ENCODE measurements at regions of chr11 and their contacts with region 1.

Region 1: GRCh38 chr11:20131788-20132666 is 28.2 kb downstream of the DBX1 start:
- DNase-seq: peak; percentile 49 to 78
- H3K4me3 ChIP-seq: peak overlapping the region; percentile 50 to 53
- H3K27ac ChIP-seq: peak overlapping the region in 1 of 2 donors; percentile 48
- H3K4me1 ChIP-seq: peaks cover 0 to 8% (median 7%) of the 10 kb centered on the region in 4 donors
- H3K27me3 ChIP-seq: no peaks in the 10 kb centered on the region
- CTCF ChIP-seq: peak; percentile 85 to 87

Region 2: GRCh38 chr11:19951558-19952115 is 180.4 kb before region 1 on chr11:
- intact Hi-C with region 1: loop called (anchors 5 kb)
- DNase-seq: no peak
- H3K4me3 ChIP-seq: no peak overlapping the region
- H3K27ac ChIP-seq: peak overlapping the region; percentile 35 to 66
- H3K4me1 ChIP-seq: peaks cover 0 to 57% (median 39%) of the 10 kb centered on the region in 4 donors
- H3K27me3 ChIP-seq: no peaks in the 10 kb centered on the region
- CTCF ChIP-seq: peak; percentile 56 to 76

Region 3: DNA sequence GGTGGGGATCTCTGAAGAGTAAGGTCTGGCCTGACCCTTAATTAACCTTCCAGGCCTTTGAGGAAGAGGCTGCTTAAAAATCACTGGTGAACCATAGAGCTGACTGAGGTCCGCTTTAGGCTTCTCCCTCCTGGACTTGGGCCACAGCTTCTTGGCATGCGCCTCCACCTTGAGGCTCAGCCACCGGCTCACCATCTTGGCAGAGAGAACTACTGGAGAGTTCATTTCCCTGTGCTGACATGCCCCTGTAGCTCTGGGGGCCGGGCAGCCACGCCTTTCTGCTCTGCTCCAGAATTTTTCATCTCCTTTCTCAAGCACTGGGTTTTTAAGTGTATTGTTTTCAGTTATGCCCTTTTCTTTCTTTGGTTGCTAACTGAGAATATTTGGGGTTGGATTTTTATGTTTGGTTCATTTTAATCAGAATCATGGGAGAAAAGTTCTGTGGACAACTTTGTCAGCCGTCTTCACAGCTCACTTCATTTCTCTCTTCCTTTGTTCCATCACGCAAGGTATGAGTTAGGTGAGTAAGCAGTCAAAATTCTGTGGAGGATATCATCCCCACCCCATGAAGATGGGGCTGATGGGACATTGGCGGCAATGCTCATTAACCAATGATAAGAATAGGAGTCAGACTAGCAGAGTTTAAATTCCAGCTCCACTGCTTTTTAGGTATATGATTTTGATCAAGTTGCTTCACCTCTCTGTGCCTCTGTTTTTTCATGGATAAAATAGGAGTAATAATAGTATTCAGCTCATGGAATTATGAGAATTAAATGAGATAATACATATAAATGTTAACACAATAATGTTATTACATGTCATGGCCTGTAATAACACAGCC is 75.7 kb before region 1 on chr11:
- intact Hi-C with region 1: no loop called
- DNase-seq: peak; percentile 45 to 88
- H3K4me3 ChIP-seq: no peak overlapping the region
- H3K27ac ChIP-seq: peak overlapping the region; percentile 25 to 32
- H3K4me1 ChIP-seq: peaks cover 0 to 56% (median 27%) of the 10 kb centered on the region in 4 donors
- H3K27me3 ChIP-seq: no peaks in the 10 kb centered on the region
- CTCF ChIP-seq: no peak

Region 4: GRCh38 chr11:20355221-20356219 is 223.5 kb after region 1 on chr11:
- intact Hi-C with region 1: loop called (anchors 10 kb)
- DNase-seq: no peak
- H3K4me3 ChIP-seq: no peak overlapping the region
- H3K27ac ChIP-seq: no peak overlapping the region
- H3K4me1 ChIP-seq: no peaks in the 10 kb centered on the region
- H3K27me3 ChIP-seq: peaks cover 0 to 8% of the 10 kb centered on the region in 2 donors
- CTCF ChIP-seq: peak; percentile 38 to 39

Measured in tibial artery (tissue), 4 donors.